Activated CD4-positive, alpha-beta memory T cell treated with anti-CD3 and anti-CD28 coated beads, Interleukin-2, amount 10 ng/mL, durations not matched to agents 7 days and 5 days (primary cell): ENCODE measurements at regions of chr2 and their contacts with region 1.

Region 1: DNA sequence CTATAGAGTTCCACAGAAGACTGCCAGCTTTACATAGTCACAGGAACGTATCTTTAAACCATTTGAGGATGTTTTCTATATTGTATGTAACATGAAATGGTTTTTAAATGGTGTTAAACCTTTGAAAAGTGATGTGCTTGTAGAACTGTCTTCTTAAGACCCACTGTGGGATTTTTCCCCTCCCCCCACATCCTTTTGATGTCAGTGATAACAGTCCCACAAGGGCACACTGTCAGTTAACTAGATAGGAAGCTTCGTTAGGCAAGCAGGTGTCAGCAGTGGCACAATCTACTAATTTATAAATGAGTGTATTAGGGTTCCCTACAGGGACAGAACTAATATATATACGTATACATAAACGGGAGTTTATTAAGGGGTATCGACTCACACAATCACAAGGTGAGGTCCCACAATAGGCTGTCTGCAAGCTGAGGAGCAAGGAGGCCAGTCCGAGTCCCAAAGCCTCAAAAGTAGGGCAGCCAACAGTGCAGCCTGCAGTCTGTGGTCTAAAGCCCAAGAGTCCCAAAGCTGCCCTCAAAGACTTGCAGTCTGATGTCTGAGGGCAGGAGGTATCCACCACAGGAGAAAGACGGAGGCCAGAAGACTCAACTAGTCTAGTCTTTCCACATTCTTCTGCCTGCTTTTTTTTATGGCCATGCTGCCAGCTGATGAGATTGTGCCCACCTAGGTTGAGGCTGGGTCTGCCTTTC is 23.8 kb upstream of the HNRNPLL start:
- DNase-seq: peak; percentile 72
- H3K4me3 Mint-ChIP-seq: peak overlapping the region; percentile 2
- H3K27ac Mint-ChIP-seq: peak overlapping the region; percentile 69
- H3K4me1 Mint-ChIP-seq: peaks cover 36% of the 10 kb centered on the region
- H3K27me3 Mint-ChIP-seq: no peaks in the 10 kb centered on the region

Region 2: DNA sequence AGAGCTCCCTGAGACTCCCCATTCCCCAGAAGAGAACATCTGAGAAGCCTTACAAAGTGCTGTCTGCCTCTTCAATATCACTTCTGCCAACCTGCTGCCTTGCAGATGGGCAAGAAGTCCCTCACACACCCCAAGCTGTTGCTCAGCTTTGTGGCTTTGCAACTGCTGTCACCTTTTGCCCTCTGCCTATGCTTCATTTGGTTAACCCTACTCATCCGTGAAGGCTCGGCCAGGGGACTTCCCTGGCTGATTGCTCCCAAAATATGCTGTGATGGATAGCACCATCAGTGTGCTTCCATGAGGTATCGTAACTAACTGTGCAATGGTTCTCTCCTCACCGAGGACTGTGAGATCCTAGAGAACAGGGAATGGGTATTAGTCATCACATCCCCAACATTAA is 461.6 kb before region 1 on chr2:
- CTCF ChIA-PET with region 1: no interaction called
- POLR2A ChIA-PET with region 1: no interaction called
- DNase-seq: no peak
- H3K4me3 Mint-ChIP-seq: no peak overlapping the region
- H3K27ac Mint-ChIP-seq: no peak overlapping the region
- H3K4me1 Mint-ChIP-seq: peaks cover 6% of the 10 kb centered on the region
- H3K27me3 Mint-ChIP-seq: peaks cover 26% of the 10 kb centered on the region

Region 3: GRCh38 chr2:38610851-38611801 is 15.4 kb before region 1 on chr2:
- CTCF ChIA-PET with region 1: interaction called, 7 read pairs
- POLR2A ChIA-PET with region 1: interaction called, 36 read pairs
- DNase-seq: peak; percentile 53
- H3K4me3 Mint-ChIP-seq: no peak overlapping the region
- H3K27ac Mint-ChIP-seq: peak overlapping the region; percentile 69
- H3K4me1 Mint-ChIP-seq: peaks cover 79% of the 10 kb centered on the region
- H3K27me3 Mint-ChIP-seq: no peaks in the 10 kb centered on the region

Region 4: DNA sequence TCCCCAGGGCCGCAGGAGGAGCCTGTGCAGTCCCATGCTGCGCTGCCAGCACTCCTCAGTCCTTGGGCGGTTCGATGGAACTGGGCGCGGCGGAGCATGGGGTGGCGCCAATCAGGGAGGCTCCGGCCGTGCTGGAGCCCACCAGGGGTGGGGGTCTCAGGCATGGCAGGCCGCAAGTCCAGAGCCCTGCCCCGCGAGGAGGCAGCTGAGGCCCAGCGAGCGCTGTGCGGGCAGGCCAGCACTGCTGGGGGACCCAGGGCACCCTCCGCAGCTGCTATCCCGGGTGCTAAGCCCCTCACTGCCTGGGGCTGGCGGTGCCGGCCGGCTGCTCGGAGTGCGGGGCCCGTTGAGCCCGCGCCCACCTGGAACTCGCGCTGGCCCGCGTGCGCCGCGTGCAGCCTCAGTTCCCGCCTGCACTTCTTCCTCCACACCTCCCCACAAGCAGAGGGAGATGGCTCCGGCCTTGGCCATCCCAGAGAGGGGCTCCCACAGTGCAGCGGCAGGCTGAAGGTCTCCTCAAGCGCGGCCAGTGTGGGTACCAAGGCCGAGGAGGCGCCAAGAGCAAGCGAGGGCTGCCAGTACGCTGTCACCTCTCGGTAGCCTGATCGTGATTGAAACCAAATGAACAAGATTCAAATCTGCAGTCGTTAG is 16.7 kb after region 1 on chr2:
- CTCF ChIA-PET with region 1: interaction called, 3 read pairs
- POLR2A ChIA-PET with region 1: interaction called, 14 read pairs
- DNase-seq: no peak
- H3K4me3 Mint-ChIP-seq: peak overlapping the region; percentile 64
- H3K27ac Mint-ChIP-seq: peak overlapping the region; percentile 100
- H3K4me1 Mint-ChIP-seq: peaks cover 59% of the 10 kb centered on the region
- H3K27me3 Mint-ChIP-seq: no peaks in the 10 kb centered on the region

Region 5: GRCh38 chr2:38765149-38765548 is 138.7 kb after region 1 on chr2:
- CTCF ChIA-PET with region 1: no interaction called
- POLR2A ChIA-PET with region 1: no interaction called
- DNase-seq: no peak
- H3K4me3 Mint-ChIP-seq: no peak overlapping the region
- H3K27ac Mint-ChIP-seq: no peak overlapping the region
- H3K4me1 Mint-ChIP-seq: peaks cover 10% of the 10 kb centered on the region
- H3K27me3 Mint-ChIP-seq: no peaks in the 10 kb centered on the region

Region 6: DNA sequence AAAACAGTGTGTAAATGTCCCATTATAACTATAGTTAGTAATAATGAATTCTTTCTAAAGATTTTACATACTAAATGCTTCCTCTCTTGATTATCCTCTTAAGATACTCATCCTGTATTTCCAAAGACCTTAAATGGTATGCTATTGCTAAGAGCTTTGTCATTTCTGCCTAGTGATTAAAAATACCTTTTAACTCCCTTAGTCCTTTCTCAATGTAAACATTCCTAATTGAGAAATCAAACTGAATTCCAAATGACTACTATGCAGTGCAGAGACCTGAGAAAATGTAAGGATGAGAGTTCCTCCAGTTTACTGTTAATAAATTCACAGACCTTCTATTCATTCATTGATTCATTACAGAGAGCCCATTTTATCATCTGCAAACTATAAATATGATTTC is 407.5 kb after region 1 on chr2:
- CTCF ChIA-PET with region 1: no interaction called
- POLR2A ChIA-PET with region 1: no interaction called
- DNase-seq: no peak
- H3K4me3 Mint-ChIP-seq: no peak overlapping the region
- H3K27ac Mint-ChIP-seq: no peak overlapping the region
- H3K4me1 Mint-ChIP-seq: peaks cover 7% of the 10 kb centered on the region
- H3K27me3 Mint-ChIP-seq: no peaks in the 10 kb centered on the region